Endothelial cell of umbilical vein (primary cell): ENCODE measurements at regions of chr1 and their contacts with region 1.

Region 1: GRCh38 chr1:26145041-26145959 is 13.6 kb upstream of the FAM110D start:
- DNase-seq: peak; percentile 76
- H3K4me3 ChIP-seq: no peak overlapping the region
- H3K27ac ChIP-seq: no peak overlapping the region
- H3K4me1 ChIP-seq: no peaks in the 10 kb centered on the region
- H3K27me3 ChIP-seq: no peaks in the 10 kb centered on the region
- CTCF ChIP-seq: peak; percentile 66 to 83
- POLR2A ChIP-seq: no peak

Region 2: GRCh38 chr1:25347556-25347955 is 797.7 kb before region 1 on chr1:
- CTCF ChIA-PET with region 1: no interaction called
- POLR2A ChIA-PET with region 1: no interaction called
- dilution Hi-C with region 1: no loop called
- intact Hi-C with region 1: no loop called
- DNase-seq: no peak
- H3K4me3 ChIP-seq: no peak overlapping the region
- H3K27ac ChIP-seq: no peak overlapping the region
- H3K4me1 ChIP-seq: no peaks in the 10 kb centered on the region
- H3K27me3 ChIP-seq: no peaks in the 10 kb centered on the region
- CTCF ChIP-seq: no peak
- POLR2A ChIP-seq: no peak

Region 3: DNA sequence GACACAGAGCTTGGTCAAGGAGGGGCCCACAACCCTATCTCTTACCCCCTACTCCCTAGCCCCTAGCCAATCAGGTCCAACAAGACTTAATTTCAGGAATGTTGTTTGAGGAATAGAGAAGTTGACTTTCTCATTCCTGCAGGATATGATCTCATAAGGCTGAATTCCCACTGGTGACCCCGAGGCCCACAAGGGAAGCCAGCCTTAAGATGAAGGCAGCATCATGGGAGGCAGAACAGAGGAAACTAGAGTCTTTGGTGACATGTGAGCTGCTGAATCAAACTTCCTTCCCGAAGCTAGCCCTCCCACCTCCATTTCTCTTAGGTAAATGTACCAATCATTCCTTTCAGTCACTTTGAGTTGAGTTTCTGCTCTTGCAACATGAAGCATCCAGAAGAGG is 42.8 kb before region 1 on chr1:
- CTCF ChIA-PET with region 1: interaction called, 192 read pairs
- POLR2A ChIA-PET with region 1: no interaction called
- dilution Hi-C with region 1: no loop called
- intact Hi-C with region 1: loop called (anchors 1 kb)
- DNase-seq: peak; percentile 68
- H3K4me3 ChIP-seq: no peak overlapping the region
- H3K27ac ChIP-seq: peak overlapping the region; percentile 62
- H3K4me1 ChIP-seq: peaks cover 30% of the 10 kb centered on the region
- H3K27me3 ChIP-seq: no peaks in the 10 kb centered on the region
- CTCF ChIP-seq: no peak
- POLR2A ChIP-seq: no peak

Region 4: DNA sequence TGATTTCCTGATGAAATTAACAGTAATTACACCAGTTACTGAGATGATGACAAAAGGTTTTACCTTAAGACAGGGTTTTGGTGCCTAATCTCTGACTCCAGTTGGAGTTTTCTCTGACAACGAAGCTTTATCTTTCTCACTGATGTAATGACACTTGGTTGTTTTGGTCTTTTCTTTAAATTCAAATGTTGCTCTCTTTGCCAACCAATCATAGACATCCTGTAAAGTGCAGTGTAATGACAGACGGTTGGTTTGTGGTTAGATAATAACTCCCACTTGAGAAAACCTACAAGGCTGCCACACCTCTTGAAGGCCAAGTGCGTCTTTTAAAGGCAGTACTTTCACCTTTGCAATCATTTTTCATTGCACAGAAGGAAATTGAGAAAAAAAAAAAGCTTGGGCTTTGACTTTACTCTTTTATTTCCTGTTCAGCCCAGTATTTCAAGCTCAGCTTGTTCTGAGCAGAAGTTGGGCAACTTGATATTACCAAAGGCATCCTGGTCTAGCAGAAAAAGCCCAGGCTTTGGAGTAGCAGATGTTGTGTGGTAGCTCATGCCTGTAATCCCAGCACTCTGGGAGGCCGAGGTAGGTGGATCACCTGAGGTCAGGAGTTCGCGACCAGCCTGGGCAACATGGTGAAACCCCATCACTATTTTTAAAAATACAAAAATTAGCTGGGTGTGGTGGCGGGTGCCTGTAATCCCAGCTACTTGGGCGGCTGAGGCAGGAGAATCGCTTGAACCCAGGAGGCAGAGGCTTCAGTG is 18.8 kb before region 1 on chr1:
- CTCF ChIA-PET with region 1: interaction called, 62 read pairs
- POLR2A ChIA-PET with region 1: interaction called, 3 read pairs
- dilution Hi-C with region 1: no loop called
- intact Hi-C with region 1: no loop called
- DNase-seq: no peak
- H3K4me3 ChIP-seq: no peak overlapping the region
- H3K27ac ChIP-seq: no peak overlapping the region
- H3K4me1 ChIP-seq: peaks cover 16% of the 10 kb centered on the region
- H3K27me3 ChIP-seq: no peaks in the 10 kb centered on the region
- CTCF ChIP-seq: no peak
- POLR2A ChIP-seq: no peak

Region 5: GRCh38 chr1:26161415-26162219 is 16.3 kb after region 1 on chr1:
- CTCF ChIA-PET with region 1: interaction called, 69 read pairs
- POLR2A ChIA-PET with region 1: no interaction called
- dilution Hi-C with region 1: no loop called
- intact Hi-C with region 1: no loop called
- DNase-seq: peak; percentile 46
- H3K4me3 ChIP-seq: peak overlapping the region in 2 of 3 experiments; percentile 20 to 29
- H3K27ac ChIP-seq: no peak overlapping the region
- H3K4me1 ChIP-seq: peaks cover 34% of the 10 kb centered on the region
- H3K27me3 ChIP-seq: no peaks in the 10 kb centered on the region
- CTCF ChIP-seq: peak in 1 of 2 donors; percentile 10
- POLR2A ChIP-seq: no peak

Region 6: GRCh38 chr1:26233903-26234643 is 88.8 kb after region 1 on chr1 and contains the start of gene CEP85:
- CTCF ChIA-PET with region 1: interaction called, 20 read pairs
- POLR2A ChIA-PET with region 1: interaction called, 3 read pairs
- dilution Hi-C with region 1: no loop called
- intact Hi-C with region 1: no loop called
- DNase-seq: peak; percentile 98
- H3K4me3 ChIP-seq: peak within 1 kb of the TSS; percentile 35 to 78 (median 65)
- H3K27ac ChIP-seq: peak within 1 kb of the TSS; percentile 9
- H3K4me1 ChIP-seq: peaks cover 12% of the 10 kb centered on the region
- H3K27me3 ChIP-seq: no peaks in the 10 kb centered on the region
- CTCF ChIP-seq: peak; percentile 87 to 92
- POLR2A ChIP-seq: peak; percentile 81
- total RNA-seq, gene CEP85: 16.2 and 17.8 TPM in 2 replicates

Region 7: GRCh38 chr1:26570287-26570686 is 425.0 kb after region 1 on chr1:
- CTCF ChIA-PET with region 1: no interaction called
- POLR2A ChIA-PET with region 1: no interaction called
- dilution Hi-C with region 1: no loop called
- intact Hi-C with region 1: no loop called
- DNase-seq: no peak
- H3K4me3 ChIP-seq: no peak overlapping the region
- H3K27ac ChIP-seq: no peak overlapping the region
- H3K4me1 ChIP-seq: no peaks in the 10 kb centered on the region
- H3K27me3 ChIP-seq: no peaks in the 10 kb centered on the region
- CTCF ChIP-seq: no peak
- POLR2A ChIP-seq: no peak